CD14-positive monocyte (primary cell): ENCODE measurements at regions of chr10 and their contacts with region 1.

Region 1: DNA sequence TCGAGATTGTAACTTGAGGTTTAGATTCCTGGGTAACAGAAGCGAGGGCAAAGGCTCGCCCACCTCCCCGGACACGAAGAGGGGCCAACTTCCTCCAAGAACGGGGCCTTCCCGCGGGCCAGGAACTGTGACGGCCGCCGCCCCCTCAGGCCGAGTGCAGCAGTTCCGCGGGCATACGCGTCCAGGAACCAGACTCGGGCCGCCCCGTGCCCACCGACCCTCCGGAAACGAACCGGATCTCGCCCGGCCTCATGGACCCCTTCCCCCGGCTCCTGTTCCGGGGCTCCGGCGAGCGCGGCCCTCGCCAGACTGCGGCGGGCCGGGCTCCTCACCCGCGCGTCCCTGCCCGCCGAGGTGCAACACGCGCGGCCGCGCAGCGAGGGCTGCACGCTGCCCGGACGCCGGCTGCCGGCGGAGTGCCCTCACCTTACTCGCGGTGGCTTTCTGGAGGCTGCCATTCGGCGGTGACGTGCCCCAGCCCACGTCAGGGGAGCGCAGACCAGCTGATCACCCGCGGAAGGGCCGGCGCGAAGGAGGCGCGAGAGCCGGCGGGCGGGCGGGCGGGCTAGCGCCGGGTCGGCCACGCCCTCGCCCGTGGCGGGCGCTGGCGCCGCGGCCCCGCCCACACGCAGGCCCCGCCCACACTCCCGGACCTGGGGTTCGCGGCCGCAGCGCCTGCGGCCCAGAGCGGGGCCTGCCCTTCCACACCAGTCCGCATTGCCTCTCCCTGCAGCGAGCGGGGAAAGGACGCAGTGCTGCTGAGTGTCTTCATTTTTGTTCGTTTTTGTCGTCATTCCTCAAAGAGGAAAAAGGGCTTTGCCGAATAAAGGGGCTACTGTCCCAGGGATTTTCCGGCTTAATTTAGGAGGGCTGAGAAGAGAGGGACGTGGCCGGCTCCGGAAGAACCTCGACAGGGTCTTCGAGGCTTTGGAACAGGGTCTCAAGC is at the start of gene XPNPEP1:
- DNase-seq: peak; percentile 86 to 90 (median 86)
- H3K4me3 ChIP-seq: peak within 1 kb of the TSS; percentile 62 to 87 (median 87)
- H3K4me3 Mint-ChIP-seq: peak within 1 kb of the TSS; percentile 83 to 91
- H3K27ac ChIP-seq: peak within 1 kb of the TSS; percentile 74 to 97
- H3K27ac Mint-ChIP-seq: peak within 1 kb of the TSS; percentile 92 to 97 (median 95)
- H3K4me1 ChIP-seq: peaks cover 21 to 28% of the 10 kb centered on the region in 2 donors
- H3K4me1 Mint-ChIP-seq: peaks cover 43% of the 10 kb centered on the region
- H3K27me3 ChIP-seq: no peaks in the 10 kb centered on the region
- H3K27me3 Mint-ChIP-seq: no peaks in the 10 kb centered on the region
- CTCF ChIP-seq: no peak
- polyA plus RNA-seq, gene XPNPEP1: 32.1 to 62.1 (median 38.4) TPM

Region 2: GRCh38 chr10:109852475-109853037 is 70.7 kb before region 1 on chr10:
- intact Hi-C with region 1: no loop called
- DNase-seq: peak; percentile 31 to 49 (median 40)
- H3K4me3 ChIP-seq: no peak overlapping the region
- H3K4me3 Mint-ChIP-seq: peak overlapping the region in 1 of 2 donors; percentile 5
- H3K27ac ChIP-seq: no peak overlapping the region
- H3K27ac Mint-ChIP-seq: peak overlapping the region in 1 of 7 donors; percentile 15
- H3K4me1 ChIP-seq: no peaks in the 10 kb centered on the region
- H3K4me1 Mint-ChIP-seq: peaks cover 6% of the 10 kb centered on the region
- H3K27me3 ChIP-seq: no peaks in the 10 kb centered on the region
- H3K27me3 Mint-ChIP-seq: peaks cover 5 to 11% (median 8%) of the 10 kb centered on the region in 3 donors
- CTCF ChIP-seq: peak; percentile 89

Region 3: GRCh38 chr10:109866168-109866994 is 56.9 kb before region 1 on chr10:
- intact Hi-C with region 1: no loop called
- DNase-seq: no peak
- H3K4me3 ChIP-seq: no peak overlapping the region
- H3K4me3 Mint-ChIP-seq: no peak overlapping the region
- H3K27ac ChIP-seq: no peak overlapping the region
- H3K27ac Mint-ChIP-seq: no peak overlapping the region
- H3K4me1 ChIP-seq: no peaks in the 10 kb centered on the region
- H3K4me1 Mint-ChIP-seq: no peaks in the 10 kb centered on the region
- H3K27me3 ChIP-seq: no peaks in the 10 kb centered on the region
- H3K27me3 Mint-ChIP-seq: no peaks in the 10 kb centered on the region
- CTCF ChIP-seq: no peak

Region 4: DNA sequence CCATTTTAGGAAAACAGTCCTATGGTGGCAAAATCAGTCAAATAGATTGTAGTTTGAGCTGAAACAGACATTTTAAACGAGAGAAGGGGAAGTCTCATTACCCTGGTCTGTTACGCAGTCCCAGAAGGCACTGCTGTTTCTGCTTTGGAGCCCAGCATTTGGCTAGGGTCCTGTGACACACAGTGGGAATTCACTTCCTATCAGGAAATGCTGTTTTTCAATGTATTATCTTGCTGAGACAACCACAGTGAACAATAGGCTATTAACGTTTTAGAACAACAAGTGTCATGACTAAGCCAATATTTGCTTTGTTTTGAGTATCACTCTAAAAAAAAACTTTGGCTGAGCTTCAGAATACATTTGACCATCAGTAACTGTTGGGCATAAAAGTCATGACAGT is 158.7 kb after region 1 on chr10:
- intact Hi-C with region 1: loop called in 1 of 2 experiments (anchors 10 kb)
- DNase-seq: peak; percentile 83 to 92 (median 85)
- H3K4me3 ChIP-seq: peak overlapping the region in 1 of 3 experiments; percentile 15
- H3K4me3 Mint-ChIP-seq: no peak overlapping the region
- H3K27ac ChIP-seq: peak overlapping the region; percentile 67 to 93
- H3K27ac Mint-ChIP-seq: peak overlapping the region; percentile 89 to 97 (median 93)
- H3K4me1 ChIP-seq: peaks cover 72 to 87% of the 10 kb centered on the region in 2 donors
- H3K4me1 Mint-ChIP-seq: peaks cover 70% of the 10 kb centered on the region
- H3K27me3 ChIP-seq: no peaks in the 10 kb centered on the region
- H3K27me3 Mint-ChIP-seq: no peaks in the 10 kb centered on the region
- CTCF ChIP-seq: no peak

Region 5: DNA sequence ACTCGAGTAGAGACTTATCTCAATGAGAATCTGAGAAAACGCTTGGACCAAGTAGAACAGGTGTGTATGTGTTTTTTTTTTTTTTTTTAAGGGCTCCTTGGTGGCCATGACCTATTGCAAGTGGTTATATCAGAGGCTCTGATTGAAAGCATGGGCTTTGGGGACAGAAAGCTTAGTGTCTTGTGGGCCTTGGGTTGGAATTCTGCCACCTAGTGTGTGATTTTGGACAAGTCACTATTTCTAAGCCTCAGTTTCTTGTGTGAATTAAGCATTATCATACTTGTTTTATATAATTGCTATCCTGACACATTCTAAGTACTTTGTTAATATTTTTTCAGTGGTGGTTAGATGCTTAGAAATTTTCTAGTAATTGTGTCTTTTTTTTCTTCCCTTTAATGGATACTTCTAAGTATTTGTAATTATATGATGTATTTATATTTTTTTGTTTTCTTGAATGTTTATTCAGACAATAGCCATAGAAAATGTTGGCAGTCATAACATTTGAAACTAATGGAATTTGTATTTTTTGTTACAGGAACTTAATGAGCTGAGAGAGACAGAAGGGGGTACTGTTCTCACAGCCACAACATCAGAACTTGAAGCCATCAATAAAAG is 677.3 kb after region 1 on chr10:
- intact Hi-C with region 1: no loop called
- DNase-seq: peak; percentile 18 to 38 (median 19)
- H3K4me3 ChIP-seq: no peak overlapping the region
- H3K4me3 Mint-ChIP-seq: no peak overlapping the region
- H3K27ac ChIP-seq: no peak overlapping the region
- H3K27ac Mint-ChIP-seq: no peak overlapping the region
- H3K4me1 ChIP-seq: no peaks in the 10 kb centered on the region
- H3K4me1 Mint-ChIP-seq: peaks cover 4% of the 10 kb centered on the region
- H3K27me3 ChIP-seq: no peaks in the 10 kb centered on the region
- H3K27me3 Mint-ChIP-seq: peaks cover 0 to 1% (median 0%) of the 10 kb centered on the region in 3 donors
- CTCF ChIP-seq: peak; percentile 80